ENCODE measurements at regions of chr1 and their contacts with region 1.

Region 1: GRCh38 chr1:91282695-91283420 is 121.8 kb downstream of the HFM1 start:
- DNase-seq: peak in 1 of 2 donors; percentile 72
- ATAC-seq: peak; percentile 52 to 62 (median 53)
- H3K4me3 ChIP-seq: no peak overlapping the region
- H3K4me3 Mint-ChIP-seq: no peak overlapping the region
- H3K27ac ChIP-seq: no peak overlapping the region
- H3K27ac Mint-ChIP-seq: no peak overlapping the region
- H3K4me1 ChIP-seq: no peaks in the 10 kb centered on the region
- H3K4me1 Mint-ChIP-seq: no peaks in the 10 kb centered on the region
- H3K27me3 ChIP-seq: no peaks in the 10 kb centered on the region
- H3K27me3 Mint-ChIP-seq: peaks cover 10 to 18% of the 10 kb centered on the region in 2 donors
- CTCF ChIP-seq: peak; percentile 80

Region 2: DNA sequence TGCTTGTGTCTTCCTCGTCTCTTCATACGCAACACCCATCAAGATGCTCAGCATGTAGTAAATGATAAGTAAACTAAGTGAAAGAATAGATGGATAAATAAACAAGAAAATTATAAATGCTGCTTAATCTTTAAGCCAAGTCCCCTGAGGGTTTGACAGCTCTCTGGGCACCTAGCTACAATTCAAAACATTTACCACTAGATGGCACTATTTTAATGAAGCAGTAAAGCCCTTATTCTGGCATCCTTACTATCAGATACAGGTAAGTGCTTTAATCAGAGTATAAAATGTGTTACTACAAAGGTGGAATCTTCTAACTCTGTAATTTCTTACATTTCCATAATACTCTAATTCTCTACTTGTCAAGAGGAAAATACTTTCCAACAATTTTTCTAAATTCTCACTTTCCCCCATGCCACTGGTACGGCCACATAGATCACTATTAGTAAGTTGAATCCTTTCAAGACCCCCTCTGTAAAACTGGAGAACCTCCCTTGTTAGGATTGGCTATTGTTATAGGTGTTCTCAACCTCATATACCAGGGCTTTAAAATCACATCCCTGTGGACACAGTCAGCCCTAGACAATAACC is 703.6 kb before region 1 on chr1:
- intact Hi-C with region 1: loop called (anchors 5 kb)
- DNase-seq: peak in 1 of 2 donors; percentile 54
- ATAC-seq: peak in 1 of 3 donors; percentile 68
- H3K4me3 ChIP-seq: no peak overlapping the region
- H3K4me3 Mint-ChIP-seq: no peak overlapping the region
- H3K27ac ChIP-seq: no peak overlapping the region
- H3K27ac Mint-ChIP-seq: no peak overlapping the region
- H3K4me1 ChIP-seq: no peaks in the 10 kb centered on the region
- H3K4me1 Mint-ChIP-seq: no peaks in the 10 kb centered on the region
- H3K27me3 ChIP-seq: no peaks in the 10 kb centered on the region
- H3K27me3 Mint-ChIP-seq: peaks cover 4 to 7% of the 10 kb centered on the region in 2 donors
- CTCF ChIP-seq: peak; percentile 69

Region 3: DNA sequence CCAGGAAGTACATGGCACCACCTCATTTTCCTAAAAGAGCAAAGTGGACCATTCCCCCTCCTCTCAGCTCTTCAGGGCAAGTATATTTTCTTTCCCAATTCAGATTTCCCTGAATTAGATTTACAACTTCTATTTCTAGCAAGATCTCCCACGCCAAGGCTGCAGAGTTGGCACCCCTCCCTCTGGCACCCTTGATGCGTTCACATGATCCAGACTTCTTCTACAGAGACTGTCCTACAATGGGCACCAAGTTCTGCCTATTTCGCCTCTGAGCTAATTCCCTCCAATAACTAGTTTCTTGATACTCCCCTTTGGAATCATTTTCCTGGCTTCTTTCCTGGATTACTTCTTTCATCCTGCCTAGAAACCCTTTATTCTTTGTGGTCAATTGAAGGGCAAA is 339.8 kb after region 1 on chr1:
- intact Hi-C with region 1: no loop called
- DNase-seq: no peak
- ATAC-seq: no peak
- H3K4me3 ChIP-seq: no peak overlapping the region
- H3K4me3 Mint-ChIP-seq: no peak overlapping the region
- H3K27ac ChIP-seq: no peak overlapping the region
- H3K27ac Mint-ChIP-seq: no peak overlapping the region
- H3K4me1 ChIP-seq: no peaks in the 10 kb centered on the region
- H3K4me1 Mint-ChIP-seq: peaks cover 0 to 8% of the 10 kb centered on the region in 2 donors
- H3K27me3 ChIP-seq: no peaks in the 10 kb centered on the region
- H3K27me3 Mint-ChIP-seq: no peaks in the 10 kb centered on the region
- CTCF ChIP-seq: no peak

Region 4: DNA sequence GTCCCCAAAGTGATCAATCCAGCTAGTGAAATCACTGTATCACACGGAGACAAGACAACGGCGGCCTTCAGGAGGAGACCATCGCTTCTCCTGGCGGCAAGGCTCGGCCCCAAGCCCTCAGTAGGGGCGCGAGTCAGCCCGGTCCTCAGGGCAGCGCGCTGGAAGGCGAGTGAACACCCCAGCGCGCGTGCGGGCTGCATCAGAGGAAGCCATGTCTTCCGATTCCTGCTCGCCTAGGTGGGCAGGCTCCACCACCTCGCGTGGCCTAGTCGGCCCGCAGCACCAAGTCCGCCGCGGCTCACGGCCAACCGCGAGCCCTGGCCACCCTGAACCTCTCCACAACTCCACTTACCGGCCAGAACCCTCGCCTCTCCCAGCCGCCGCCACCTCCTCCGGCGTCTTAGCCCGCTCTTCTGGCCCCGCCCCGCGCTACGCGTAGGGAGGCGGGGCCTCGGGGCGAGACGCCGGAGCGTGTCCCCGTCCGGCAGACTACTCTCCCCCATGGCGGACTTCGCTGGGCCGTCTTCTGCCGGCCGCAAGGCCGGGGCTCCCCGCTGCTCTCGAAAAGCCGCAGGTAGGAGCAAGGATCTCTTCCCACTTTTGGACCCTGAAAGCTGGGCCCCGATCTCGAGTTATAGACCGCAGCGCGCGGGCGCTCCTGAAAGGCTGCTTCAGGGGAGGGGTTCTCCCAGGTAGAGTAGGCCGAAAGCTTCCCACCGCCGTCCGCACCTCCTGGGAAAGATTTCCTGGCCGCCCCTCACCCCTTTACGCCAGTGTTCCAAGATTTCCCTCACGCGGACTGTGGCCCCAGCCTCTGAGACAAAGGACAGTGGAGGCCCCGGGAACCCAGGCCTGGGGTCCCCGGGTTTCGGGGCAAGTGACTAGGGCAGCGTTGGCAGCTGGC is 1016.0 kb after region 1 on chr1 and contains the starts of genes GLMN and RPAP2:
- intact Hi-C with region 1: loop called (anchors 10 kb)
- DNase-seq: peak; percentile 77 to 88
- ATAC-seq: peak; percentile 94 to 98 (median 96)
- H3K4me3 ChIP-seq: peak within 1 kb of the TSS; percentile 83
- H3K4me3 Mint-ChIP-seq: peak within 1 kb of the TSS; percentile 96
- H3K27ac ChIP-seq: peak within 1 kb of the TSS; percentile 91
- H3K27ac Mint-ChIP-seq: peak within 1 kb of the TSS; percentile 95 to 99
- H3K4me1 ChIP-seq: peaks cover 9% of the 10 kb centered on the region
- H3K4me1 Mint-ChIP-seq: peaks cover 31 to 37% of the 10 kb centered on the region in 2 donors
- H3K27me3 ChIP-seq: no peaks in the 10 kb centered on the region
- H3K27me3 Mint-ChIP-seq: no peaks in the 10 kb centered on the region
- CTCF ChIP-seq: no peak
- total RNA-seq, gene GLMN: 19.8 to 25.9 (median 19.9) TPM
- total RNA-seq, gene RPAP2: 39.4 to 45.7 (median 39.8) TPM

Region 5: DNA sequence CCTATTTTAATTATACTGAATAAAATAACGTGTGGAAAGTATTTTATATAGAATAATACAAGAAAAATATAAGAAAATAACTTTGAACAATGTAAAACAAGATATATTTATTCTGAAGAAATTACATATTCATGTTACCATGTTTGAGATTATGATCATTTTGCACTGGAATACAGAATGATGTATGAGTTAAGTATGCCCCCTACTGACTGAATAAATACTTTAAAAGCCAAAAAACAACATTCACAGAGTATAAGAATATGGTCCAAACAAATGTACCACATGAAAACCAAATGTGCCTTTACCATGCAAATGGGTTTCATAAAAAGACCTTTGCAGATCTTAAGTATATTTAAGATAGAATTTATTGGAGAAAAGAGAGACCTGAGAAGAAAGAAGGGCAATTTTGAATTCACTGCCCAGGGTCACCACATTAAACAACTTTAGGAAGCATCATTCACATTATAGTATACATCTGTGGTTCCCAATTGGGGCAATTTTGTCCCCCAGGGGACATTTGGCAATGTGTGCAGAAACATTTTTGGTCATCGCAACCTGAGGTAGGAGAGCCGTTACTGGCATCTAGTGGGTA is 1340.4 kb after region 1 on chr1:
- intact Hi-C with region 1: loop called (anchors 10 kb)
- DNase-seq: peak in 1 of 2 donors; percentile 61
- ATAC-seq: peak in 2 of 3 donors; percentile 38 to 53
- H3K4me3 ChIP-seq: no peak overlapping the region
- H3K4me3 Mint-ChIP-seq: no peak overlapping the region
- H3K27ac ChIP-seq: no peak overlapping the region
- H3K27ac Mint-ChIP-seq: no peak overlapping the region
- H3K4me1 ChIP-seq: no peaks in the 10 kb centered on the region
- H3K4me1 Mint-ChIP-seq: no peaks in the 10 kb centered on the region
- H3K27me3 ChIP-seq: no peaks in the 10 kb centered on the region
- H3K27me3 Mint-ChIP-seq: peaks cover 0 to 3% of the 10 kb centered on the region in 2 donors
- CTCF ChIP-seq: peak; percentile 74

Measured in natural killer cell (primary cell).